ENCODE measurements at regions of chr1 and their contacts with region 1.

Region 1: GRCh38 chr1:224513787-224514209 is 79.2 kb upstream of the WDR26 start:
- DNase-seq: peak; percentile 97
- H3K4me3 Mint-ChIP-seq: no peak overlapping the region
- H3K27ac Mint-ChIP-seq: no peak overlapping the region
- H3K4me1 Mint-ChIP-seq: peaks cover 14% of the 10 kb centered on the region
- H3K27me3 Mint-ChIP-seq: no peaks in the 10 kb centered on the region
- CTCF ChIP-seq: peak; percentile 100

Region 2: DNA sequence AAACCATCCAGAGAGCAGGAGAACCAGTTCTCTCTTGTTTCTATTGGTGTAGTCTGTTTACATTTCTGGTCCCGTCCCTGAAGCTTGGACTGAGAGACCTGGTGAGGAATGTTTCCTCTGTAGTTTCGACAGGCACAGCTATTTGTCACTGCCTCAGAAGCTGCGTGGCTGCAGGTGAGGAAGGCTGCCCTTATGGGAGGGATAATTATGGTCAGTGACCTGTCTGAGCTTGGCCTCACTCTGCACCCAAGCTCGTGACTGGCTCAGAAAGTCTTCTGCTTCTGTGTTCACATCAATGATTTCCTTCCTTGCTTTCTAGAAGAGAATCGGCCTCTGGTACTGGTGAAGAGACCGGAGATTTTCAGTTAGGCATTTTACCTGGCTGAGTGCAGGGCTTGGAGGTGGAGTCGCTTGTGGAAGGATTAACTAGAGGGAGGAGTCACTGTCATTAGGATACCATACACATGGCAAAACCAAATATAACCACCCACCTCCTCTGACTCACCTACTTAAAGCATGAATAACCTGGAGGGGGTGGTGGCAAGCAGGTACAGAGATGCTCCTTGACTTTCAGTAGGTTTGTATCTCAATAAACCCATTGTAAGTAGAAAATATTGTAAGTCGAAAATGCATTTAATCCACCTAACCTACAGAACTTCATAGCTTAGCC is 59.3 kb before region 1 on chr1:
- CTCF ChIA-PET with region 1: interaction called, 23 read pairs
- POLR2A ChIA-PET with region 1: interaction called, 4 read pairs
- intact Hi-C with region 1: no loop called
- DNase-seq: peak; percentile 95
- H3K4me3 Mint-ChIP-seq: peak overlapping the region; percentile 46
- H3K27ac Mint-ChIP-seq: peak overlapping the region; percentile 68
- H3K4me1 Mint-ChIP-seq: peaks cover 51% of the 10 kb centered on the region
- H3K27me3 Mint-ChIP-seq: no peaks in the 10 kb centered on the region
- CTCF ChIP-seq: no peak

Region 3: GRCh38 chr1:224542783-224543440 is 29.1 kb after region 1 on chr1:
- CTCF ChIA-PET with region 1: interaction called, 64 read pairs
- POLR2A ChIA-PET with region 1: no interaction called
- intact Hi-C with region 1: no loop called
- DNase-seq: peak; percentile 92
- H3K4me3 Mint-ChIP-seq: no peak overlapping the region
- H3K27ac Mint-ChIP-seq: peak overlapping the region; percentile 59
- H3K4me1 Mint-ChIP-seq: peaks cover 22% of the 10 kb centered on the region
- H3K27me3 Mint-ChIP-seq: no peaks in the 10 kb centered on the region
- CTCF ChIP-seq: no peak

Region 4: GRCh38 chr1:224607188-224608148 is 93.7 kb after region 1 on chr1:
- CTCF ChIA-PET with region 1: interaction called, 17 read pairs
- POLR2A ChIA-PET with region 1: no interaction called
- intact Hi-C with region 1: no loop called
- DNase-seq: no peak
- H3K4me3 Mint-ChIP-seq: no peak overlapping the region
- H3K27ac Mint-ChIP-seq: no peak overlapping the region
- H3K4me1 Mint-ChIP-seq: no peaks in the 10 kb centered on the region
- H3K27me3 Mint-ChIP-seq: no peaks in the 10 kb centered on the region
- CTCF ChIP-seq: no peak

Region 5: DNA sequence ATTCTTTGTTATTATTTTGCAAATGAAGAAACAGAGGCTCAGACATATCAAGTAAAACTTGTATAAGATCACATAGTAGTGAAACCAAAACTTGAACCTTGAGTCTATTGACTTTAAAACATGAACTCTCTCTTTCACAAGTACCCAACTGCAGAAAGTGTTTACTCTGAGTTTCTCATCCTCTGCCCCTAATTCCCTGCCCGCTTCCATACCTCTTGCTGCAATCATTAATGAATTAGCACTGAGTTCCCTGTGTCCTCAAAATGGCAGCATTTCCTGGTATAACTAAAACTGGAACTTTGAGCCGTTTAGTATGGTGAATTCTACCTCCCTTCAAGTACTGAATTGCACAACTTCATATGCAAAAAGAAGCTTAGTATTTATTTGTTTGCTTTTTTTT is 268.0 kb after region 1 on chr1:
- CTCF ChIA-PET with region 1: interaction called, 10 read pairs
- POLR2A ChIA-PET with region 1: no interaction called
- intact Hi-C with region 1: no loop called
- DNase-seq: no peak
- H3K4me3 Mint-ChIP-seq: no peak overlapping the region
- H3K27ac Mint-ChIP-seq: no peak overlapping the region
- H3K4me1 Mint-ChIP-seq: peaks cover 12% of the 10 kb centered on the region
- H3K27me3 Mint-ChIP-seq: no peaks in the 10 kb centered on the region
- CTCF ChIP-seq: no peak

Region 6: GRCh38 chr1:224884361-224884801 is 370.6 kb after region 1 on chr1:
- CTCF ChIA-PET with region 1: interaction called, 27 read pairs
- POLR2A ChIA-PET with region 1: no interaction called
- intact Hi-C with region 1: no loop called
- DNase-seq: no peak
- H3K4me3 Mint-ChIP-seq: no peak overlapping the region
- H3K27ac Mint-ChIP-seq: no peak overlapping the region
- H3K4me1 Mint-ChIP-seq: peaks cover 26% of the 10 kb centered on the region
- H3K27me3 Mint-ChIP-seq: no peaks in the 10 kb centered on the region
- CTCF ChIP-seq: no peak

Region 7: GRCh38 chr1:224929335-224930237 is 415.8 kb after region 1 on chr1 and contains the start of gene DNAH14:
- CTCF ChIA-PET with region 1: interaction called, 375 read pairs
- POLR2A ChIA-PET with region 1: interaction called, 5 read pairs
- intact Hi-C with region 1: no loop called
- DNase-seq: peak; percentile 96
- H3K4me3 Mint-ChIP-seq: peak within 1 kb of the TSS; percentile 83
- H3K27ac Mint-ChIP-seq: peak within 1 kb of the TSS; percentile 81
- H3K4me1 Mint-ChIP-seq: no peaks in the 10 kb centered on the region
- H3K27me3 Mint-ChIP-seq: no peaks in the 10 kb centered on the region
- CTCF ChIP-seq: no peak
- total RNA-seq, gene DNAH14: 69.7 and 70.8 TPM in 2 replicates

Measured in MCF 10A (cell line).